ENCODE measurements at regions of chrX and their contacts with region 1.

Region 1: DNA sequence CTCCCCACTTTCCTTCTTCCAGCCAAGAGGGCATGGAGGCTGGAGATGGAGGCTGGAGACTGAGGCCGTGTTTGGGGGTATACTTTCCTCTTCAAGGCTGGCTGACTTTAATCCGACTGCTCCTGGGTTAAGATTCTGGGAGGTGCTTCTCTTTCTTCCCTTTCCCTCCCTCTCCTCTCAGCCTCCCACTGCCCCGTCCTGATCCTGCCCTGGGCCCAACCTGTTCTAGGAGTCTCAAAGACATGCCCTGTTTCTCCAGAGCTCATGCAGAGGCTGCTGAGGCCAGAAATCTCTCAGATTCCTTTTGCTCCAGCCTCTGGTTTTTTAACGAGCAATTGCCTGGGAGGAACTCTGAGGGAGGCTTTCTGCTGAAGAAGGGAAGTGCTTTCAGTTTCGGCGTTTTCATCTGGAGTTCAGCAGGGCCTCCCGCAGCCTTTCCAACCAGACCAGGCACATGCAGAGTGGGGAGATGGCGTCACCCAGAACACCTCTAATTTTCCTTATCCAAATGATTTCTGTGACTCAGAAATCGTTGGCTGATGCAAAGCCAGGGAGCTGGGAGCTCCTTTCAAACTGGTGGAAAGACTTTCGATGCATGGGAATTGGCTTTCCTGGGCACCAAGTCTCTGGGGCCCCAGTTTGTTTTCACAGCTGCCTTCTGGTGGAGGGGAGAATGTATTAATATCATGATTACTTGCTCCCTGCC is 34.5 kb upstream of the FAM9C start:
- DNase-seq: no peak
- ATAC-seq: no peak
- H3K4me3 ChIP-seq: no peak overlapping the region
- H3K27ac ChIP-seq: peak overlapping the region; percentile 81
- H3K4me1 ChIP-seq: peaks cover 94% of the 10 kb centered on the region
- H3K27me3 ChIP-seq: no peaks in the 10 kb centered on the region
- CTCF ChIP-seq: no peak
- EP300 ChIP-seq: no peak
- POLR2A ChIP-seq: no peak
- RAD21 ChIP-seq: no peak

Region 2: DNA sequence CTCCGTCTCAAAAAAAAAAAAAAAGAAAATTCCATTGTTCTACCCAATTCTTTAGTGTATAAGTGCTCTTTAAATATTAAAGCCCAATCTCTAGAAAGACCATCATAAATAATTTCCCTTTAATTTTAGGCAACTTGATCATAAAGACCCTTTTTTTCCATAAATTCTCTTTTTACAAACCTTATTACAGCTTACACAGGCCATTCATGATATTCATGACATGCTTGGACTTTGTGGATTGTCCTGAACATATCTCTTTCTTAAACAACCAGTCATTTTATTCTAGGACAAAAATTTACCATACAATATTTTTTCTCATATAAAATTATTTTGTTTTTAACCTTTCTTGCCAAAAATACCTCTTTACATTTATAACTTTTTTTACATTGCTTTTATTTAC is 141.9 kb before region 1 on chrX:
- CTCF ChIA-PET with region 1: no interaction called
- POLR2A ChIA-PET with region 1: no interaction called
- RAD21 ChIA-PET with region 1: no interaction called
- SMC1A ChIA-PET with region 1: no interaction called
- in situ Hi-C with region 1: no loop called
- intact Hi-C with region 1: no loop called
- DNase-seq: no peak
- ATAC-seq: no peak
- H3K4me3 ChIP-seq: no peak overlapping the region
- H3K27ac ChIP-seq: no peak overlapping the region
- H3K4me1 ChIP-seq: no peaks in the 10 kb centered on the region
- H3K27me3 ChIP-seq: no peaks in the 10 kb centered on the region
- CTCF ChIP-seq: no peak
- EP300 ChIP-seq: no peak
- POLR2A ChIP-seq: no peak
- RAD21 ChIP-seq: no peak

Region 3: GRCh38 chrX:12955882-12956703 is 122.8 kb before region 1 on chrX:
- CTCF ChIA-PET with region 1: interaction called, 312 read pairs
- POLR2A ChIA-PET with region 1: interaction called, 10 read pairs
- RAD21 ChIA-PET with region 1: interaction called, 549 read pairs
- SMC1A ChIA-PET with region 1: interaction called, 632 read pairs
- in situ Hi-C with region 1: no loop called
- intact Hi-C with region 1: no loop called
- DNase-seq: peak; percentile 77
- ATAC-seq: peak; percentile 59
- H3K4me3 ChIP-seq: peak overlapping the region; percentile 32
- H3K27ac ChIP-seq: peak overlapping the region; percentile 99
- H3K4me1 ChIP-seq: peaks cover 42% of the 10 kb centered on the region
- H3K27me3 ChIP-seq: no peaks in the 10 kb centered on the region
- CTCF ChIP-seq: no peak
- EP300 ChIP-seq: peak; percentile 48 to 62; a peak in 2 of 4 replicates
- POLR2A ChIP-seq: peak; percentile 30
- RAD21 ChIP-seq: no peak

Region 4: DNA sequence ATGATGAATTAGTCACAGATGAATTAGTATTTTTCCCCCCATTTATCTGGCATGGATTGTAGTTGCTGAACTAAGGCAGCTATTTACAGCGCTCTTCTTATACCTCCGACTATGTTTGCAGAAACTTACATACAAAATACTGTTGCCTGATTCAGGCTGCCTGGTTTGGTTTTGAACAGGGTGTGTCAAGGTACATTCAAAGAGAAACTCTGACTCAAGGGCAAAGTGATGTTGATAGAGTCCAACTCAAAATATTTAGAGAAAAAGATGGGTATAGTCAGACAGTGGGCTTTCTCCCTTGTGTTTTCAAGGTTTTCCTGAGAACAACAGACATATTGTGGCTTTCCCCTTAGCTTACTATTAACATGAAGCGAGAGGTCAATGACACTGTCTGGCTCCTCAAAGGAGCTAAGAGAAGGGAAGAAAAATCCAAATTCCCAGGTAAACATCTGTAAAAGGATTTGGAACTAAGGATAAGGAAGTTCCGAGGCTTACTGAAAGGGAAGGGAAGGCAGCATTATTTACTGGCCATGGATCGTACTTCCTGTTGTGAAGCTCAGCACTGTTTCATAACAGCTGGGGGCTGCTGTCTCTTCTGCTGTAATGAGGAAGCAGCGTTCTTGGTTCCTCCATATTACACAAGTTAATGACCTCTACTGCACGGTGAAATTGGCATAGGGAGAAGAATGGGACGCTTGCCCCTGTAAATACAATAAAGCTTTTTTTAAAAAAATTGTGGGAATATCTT is 65.4 kb before region 1 on chrX:
- CTCF ChIA-PET with region 1: interaction called, 6 read pairs
- POLR2A ChIA-PET with region 1: interaction called, 280 read pairs
- RAD21 ChIA-PET with region 1: interaction called, 689 read pairs
- SMC1A ChIA-PET with region 1: interaction called, 847 read pairs
- in situ Hi-C with region 1: no loop called
- intact Hi-C with region 1: no loop called
- DNase-seq: no peak
- ATAC-seq: peak; percentile 87
- H3K4me3 ChIP-seq: peak overlapping the region; percentile 14
- H3K27ac ChIP-seq: peak overlapping the region; percentile 96
- H3K4me1 ChIP-seq: peaks cover 63% of the 10 kb centered on the region
- H3K27me3 ChIP-seq: no peaks in the 10 kb centered on the region
- CTCF ChIP-seq: no peak
- EP300 ChIP-seq: 0 out of 4 replicates have a peak, but pooled peaks of 1 of the 2 experiments have one; percentile 2
- POLR2A ChIP-seq: no peak
- RAD21 ChIP-seq: no peak

Region 5: GRCh38 chrX:13029341-13029740 is 49.6 kb before region 1 on chrX:
- CTCF ChIA-PET with region 1: no interaction called
- POLR2A ChIA-PET with region 1: interaction called, 11 read pairs
- RAD21 ChIA-PET with region 1: interaction called, 7 read pairs
- SMC1A ChIA-PET with region 1: interaction called, 34 read pairs
- in situ Hi-C with region 1: no loop called
- intact Hi-C with region 1: loop called (anchors 2 kb)
- DNase-seq: no peak
- ATAC-seq: peak; percentile 21
- H3K4me3 ChIP-seq: no peak overlapping the region
- H3K27ac ChIP-seq: peak overlapping the region; percentile 83
- H3K4me1 ChIP-seq: peaks cover 45% of the 10 kb centered on the region
- H3K27me3 ChIP-seq: no peaks in the 10 kb centered on the region
- CTCF ChIP-seq: no peak
- EP300 ChIP-seq: no peak
- POLR2A ChIP-seq: no peak
- RAD21 ChIP-seq: no peak

Region 6: GRCh38 chrX:13688958-13689740 is 610.3 kb after region 1 on chrX and contains the start of gene RAB9A:
- CTCF ChIA-PET with region 1: no interaction called
- POLR2A ChIA-PET with region 1: no interaction called
- RAD21 ChIA-PET with region 1: no interaction called
- SMC1A ChIA-PET with region 1: no interaction called
- in situ Hi-C with region 1: no loop called
- intact Hi-C with region 1: loop called (anchors 5 kb)
- DNase-seq: no peak
- ATAC-seq: peak; percentile 77
- H3K4me3 ChIP-seq: peak within 1 kb of the TSS; percentile 84
- H3K27ac ChIP-seq: peak within 1 kb of the TSS; percentile 91
- H3K4me1 ChIP-seq: peaks cover 16% of the 10 kb centered on the region
- H3K27me3 ChIP-seq: no peaks in the 10 kb centered on the region
- CTCF ChIP-seq: no peak
- EP300 ChIP-seq: peak in 1 of 2 experiments; percentile 18; a peak in 1 of 4 replicates
- POLR2A ChIP-seq: peak; percentile 86
- RAD21 ChIP-seq: no peak
- polyA plus RNA-seq, gene RAB9A: 49.2 to 49.3 TPM

Measured in GM12878 (cell line).